ENCODE measurements at regions of chr11 and their contacts with region 1.

Region 1: GRCh38 chr11:61598886-61599868 is 18.3 kb upstream of the SYT7 start:
- DNase-seq: no peak
- H3K4me3 ChIP-seq: no peak overlapping the region
- H3K27ac ChIP-seq: no peak overlapping the region
- H3K4me1 ChIP-seq: peaks cover 25% of the 10 kb centered on the region
- H3K27me3 ChIP-seq: no peaks in the 10 kb centered on the region
- CTCF ChIP-seq: no peak

Region 2: GRCh38 chr11:60943085-60943484 is 656.1 kb before region 1 on chr11:
- CTCF ChIA-PET with region 1: no interaction called
- POLR2A ChIA-PET with region 1: interaction called, 11 read pairs
- intact Hi-C with region 1: no loop called
- DNase-seq: peak; percentile 86 to 99
- H3K4me3 ChIP-seq: peak overlapping the region; percentile 11; the same call in 1 of the 2 replicates
- H3K27ac ChIP-seq: peak overlapping the region; percentile 74
- H3K4me1 ChIP-seq: peaks cover 26% of the 10 kb centered on the region
- H3K27me3 ChIP-seq: no peaks in the 10 kb centered on the region
- CTCF ChIP-seq: no peak